Gastrocnemius medialis (tissue), 4 donors: ENCODE measurements at regions of chr1 and their contacts with region 1.

Region 1: DNA sequence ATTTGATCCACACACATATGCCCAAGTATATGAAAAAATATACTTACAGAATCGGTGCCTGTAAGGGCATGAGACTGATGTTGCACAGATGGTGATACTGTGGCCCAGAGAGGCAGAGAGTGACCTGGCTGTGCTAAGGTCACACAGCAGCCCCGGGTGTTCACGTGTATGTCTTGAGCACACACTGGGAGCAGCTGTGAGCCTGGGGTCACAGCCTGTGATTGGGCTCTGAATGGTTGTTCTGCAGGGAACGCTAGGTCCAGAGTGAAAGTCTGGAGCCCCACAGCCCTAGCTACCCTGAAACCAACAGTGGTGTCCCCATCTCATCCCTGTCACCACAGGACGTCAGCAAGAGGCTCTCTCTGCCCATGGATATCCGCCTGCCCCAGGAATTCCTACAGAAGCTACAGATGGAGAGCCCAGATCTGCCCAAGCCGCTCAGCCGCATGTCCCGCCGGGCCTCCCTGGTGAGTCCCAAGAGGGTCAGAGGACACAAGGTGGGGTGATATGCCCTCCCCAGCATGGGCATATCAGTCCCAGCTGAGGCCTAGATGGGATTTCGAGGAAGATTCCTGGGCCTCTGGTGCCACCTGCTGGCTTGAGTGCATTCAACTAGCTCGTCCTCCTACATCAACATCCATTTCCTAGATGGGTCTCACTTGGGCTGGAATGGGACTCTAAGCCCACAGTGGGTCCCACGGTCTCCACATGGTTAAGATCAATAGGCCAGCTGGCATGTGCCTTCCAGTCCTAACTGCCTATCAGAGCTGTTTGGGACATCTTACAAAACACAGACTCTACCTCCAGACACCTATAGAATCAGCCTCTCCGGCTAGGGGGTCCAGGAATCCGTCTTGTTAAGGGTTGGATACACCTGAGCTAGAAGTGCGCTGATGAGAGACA is 19.7 kb downstream of the CDK18 start:
- DNase-seq: peak; percentile 40 to 49
- ATAC-seq: peak; percentile 63 to 70
- H3K4me3 ChIP-seq: no peak overlapping the region
- H3K27ac ChIP-seq: no peak overlapping the region
- H3K4me1 ChIP-seq: peaks cover 5 to 10% of the 10 kb centered on the region in 2 donors
- H3K27me3 ChIP-seq: peaks cover 0 to under 1% (median 0%) of the 10 kb centered on the region in 3 donors
- CTCF ChIP-seq: peak; percentile 64 to 82 (median 73)
- POLR2A ChIP-seq: no peak

Region 2: GRCh38 chr1:205354259-205354904 is 169.8 kb before region 1 on chr1:
- in situ Hi-C with region 1: loop called in 2 of 4 experiments (anchors 10 kb)
- intact Hi-C with region 1: loop called (anchors 5 kb)
- DNase-seq: no peak
- ATAC-seq: peak in 1 of 2 donors; percentile 58
- H3K4me3 ChIP-seq: no peak overlapping the region
- H3K27ac ChIP-seq: no peak overlapping the region
- H3K4me1 ChIP-seq: no peaks in the 10 kb centered on the region
- H3K27me3 ChIP-seq: peaks cover 2 to 12% (median 7%) of the 10 kb centered on the region in 3 donors
- CTCF ChIP-seq: peak; percentile 51 to 76 (median 68)
- POLR2A ChIP-seq: no peak

Region 3: DNA sequence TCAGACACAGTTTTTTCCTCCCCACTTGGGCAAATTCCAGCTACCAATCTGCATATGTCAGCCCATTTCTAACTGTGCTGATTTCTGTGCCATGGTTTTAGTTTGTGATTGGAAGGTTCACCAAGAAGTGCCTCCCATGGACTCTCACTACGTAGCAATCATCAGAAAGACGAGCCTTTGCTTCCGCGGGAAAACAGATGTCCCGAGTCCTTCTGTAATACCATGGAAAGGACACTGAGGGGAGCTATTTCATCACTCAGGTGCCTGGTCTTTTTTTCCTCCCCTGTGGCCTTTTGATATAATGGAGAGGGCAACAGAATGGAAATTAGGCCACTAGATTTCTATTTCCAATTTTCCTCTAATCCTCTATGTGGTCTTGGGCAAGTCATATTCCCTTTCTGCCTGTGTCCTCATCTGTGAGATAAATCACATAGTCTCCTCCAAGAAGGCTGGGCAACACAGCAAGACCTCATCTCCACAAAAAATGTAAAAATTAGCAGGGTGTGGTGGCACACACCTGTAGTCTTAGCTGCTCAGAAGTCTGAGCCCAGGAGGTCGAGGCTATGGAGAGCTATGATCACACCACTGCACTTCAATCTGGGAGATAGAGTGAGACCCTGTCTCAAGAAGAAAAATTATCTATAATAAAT is 127.0 kb before region 1 on chr1:
- in situ Hi-C with region 1: loop called in 1 of 4 experiments (anchors 10 kb)
- intact Hi-C with region 1: loop called (anchors 1 kb)
- DNase-seq: no peak
- ATAC-seq: peak; percentile 83 to 85
- H3K4me3 ChIP-seq: no peak overlapping the region
- H3K27ac ChIP-seq: no peak overlapping the region
- H3K4me1 ChIP-seq: no peaks in the 10 kb centered on the region
- H3K27me3 ChIP-seq: no peaks in the 10 kb centered on the region
- CTCF ChIP-seq: peak; percentile 49 to 73 (median 71)
- POLR2A ChIP-seq: no peak

Region 4: DNA sequence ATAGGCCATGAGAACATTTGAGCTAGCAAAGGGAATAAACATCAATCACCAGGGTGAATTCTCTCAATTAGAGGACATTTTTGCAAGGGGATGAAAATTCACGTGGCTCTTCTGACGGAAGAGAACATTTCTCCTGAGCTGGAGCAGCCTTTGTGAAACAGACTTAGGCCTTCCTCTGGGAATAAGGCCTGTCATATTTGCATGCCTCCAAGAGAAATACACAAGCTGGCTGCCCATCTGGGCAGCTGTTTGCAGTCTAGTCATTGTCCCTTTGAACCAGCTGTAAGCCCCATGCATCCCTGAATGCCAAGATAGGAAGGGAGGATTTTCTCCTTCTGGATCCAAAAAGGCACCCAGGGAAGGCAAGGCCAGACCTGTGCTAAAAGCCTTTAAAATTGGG is 107.8 kb before region 1 on chr1:
- in situ Hi-C with region 1: loop called in 1 of 4 experiments (anchors 5 kb)
- intact Hi-C with region 1: no loop called
- DNase-seq: no peak
- ATAC-seq: no peak
- H3K4me3 ChIP-seq: no peak overlapping the region
- H3K27ac ChIP-seq: no peak overlapping the region
- H3K4me1 ChIP-seq: peaks cover 9% of the 10 kb centered on the region in 2 donors
- H3K27me3 ChIP-seq: no peaks in the 10 kb centered on the region
- CTCF ChIP-seq: no peak
- POLR2A ChIP-seq: no peak

Region 5: GRCh38 chr1:205485338-205486228 is 38.6 kb before region 1 on chr1:
- in situ Hi-C with region 1: loop called in 3 of 4 experiments (anchors 5 kb)
- intact Hi-C with region 1: loop called (anchors 1 kb)
- DNase-seq: peak in 1 of 2 donors; percentile 36
- ATAC-seq: peak; percentile 73 to 81
- H3K4me3 ChIP-seq: no peak overlapping the region
- H3K27ac ChIP-seq: no peak overlapping the region
- H3K4me1 ChIP-seq: no peaks in the 10 kb centered on the region
- H3K27me3 ChIP-seq: peaks cover 15 to 32% (median 23%) of the 10 kb centered on the region in 3 donors
- CTCF ChIP-seq: peak; percentile 78 to 97 (median 86)
- POLR2A ChIP-seq: no peak